ENCODE measurements at regions of chr3 and their contacts with region 1.

Region 1: DNA sequence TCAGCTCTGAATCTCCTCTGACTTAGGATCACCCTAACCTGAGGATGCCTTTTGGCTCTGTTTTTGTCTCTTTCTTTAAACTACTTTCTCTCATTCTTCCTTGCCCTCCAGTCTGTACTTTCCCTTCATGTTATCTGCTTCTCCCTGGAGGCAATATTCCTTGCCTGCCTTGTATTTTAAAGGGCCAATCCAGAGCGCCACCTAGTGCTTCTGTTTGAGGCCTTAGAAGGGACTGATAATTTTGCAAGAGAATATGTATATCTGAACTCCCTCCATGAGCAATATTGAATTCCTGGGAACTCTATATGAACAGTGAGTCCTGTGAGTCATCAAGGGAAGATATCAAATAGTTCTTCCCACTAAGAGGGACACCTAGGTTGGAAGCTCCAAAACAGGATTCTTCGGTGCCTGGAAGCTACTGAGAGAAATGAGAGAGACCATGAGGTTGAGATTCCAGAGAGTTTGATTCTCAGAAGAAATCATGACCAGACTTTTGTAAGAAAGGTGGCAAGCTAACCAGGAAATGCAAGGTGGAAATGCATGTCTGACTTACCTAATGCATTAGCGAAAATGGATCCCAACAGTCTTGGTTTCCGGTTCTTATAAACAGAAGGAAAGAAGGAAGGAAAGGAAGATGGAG is 203.8 kb upstream of the CD96 start:
- DNase-seq: peak; percentile 14
- H3K4me3 Mint-ChIP-seq: no peak overlapping the region
- H3K27ac Mint-ChIP-seq: no peak overlapping the region
- H3K4me1 Mint-ChIP-seq: peaks cover 23% of the 10 kb centered on the region
- H3K27me3 Mint-ChIP-seq: peaks cover 20% of the 10 kb centered on the region

Region 2: GRCh38 chr3:111071257-111072015 is 266.7 kb before region 1 on chr3 and contains the start of gene NECTIN3:
- intact Hi-C with region 1: loop called (anchors 5 kb)
- DNase-seq: peak; percentile 70
- H3K4me3 Mint-ChIP-seq: peak within 1 kb of the TSS; percentile 87
- H3K27ac Mint-ChIP-seq: peak within 1 kb of the TSS; percentile 58
- H3K4me1 Mint-ChIP-seq: peaks cover 23% of the 10 kb centered on the region
- H3K27me3 Mint-ChIP-seq: peaks cover 69% of the 10 kb centered on the region
- total RNA-seq, gene NECTIN3: 2.2 and 2.6 TPM in 2 replicates

Region 3: GRCh38 chr3:111238885-111239284 is 99.3 kb before region 1 on chr3:
- intact Hi-C with region 1: loop called (anchors 2 kb)
- DNase-seq: peak; percentile 40
- H3K4me3 Mint-ChIP-seq: no peak overlapping the region
- H3K27ac Mint-ChIP-seq: no peak overlapping the region
- H3K4me1 Mint-ChIP-seq: peaks cover 26% of the 10 kb centered on the region
- H3K27me3 Mint-ChIP-seq: peaks cover 6% of the 10 kb centered on the region

Region 4: DNA sequence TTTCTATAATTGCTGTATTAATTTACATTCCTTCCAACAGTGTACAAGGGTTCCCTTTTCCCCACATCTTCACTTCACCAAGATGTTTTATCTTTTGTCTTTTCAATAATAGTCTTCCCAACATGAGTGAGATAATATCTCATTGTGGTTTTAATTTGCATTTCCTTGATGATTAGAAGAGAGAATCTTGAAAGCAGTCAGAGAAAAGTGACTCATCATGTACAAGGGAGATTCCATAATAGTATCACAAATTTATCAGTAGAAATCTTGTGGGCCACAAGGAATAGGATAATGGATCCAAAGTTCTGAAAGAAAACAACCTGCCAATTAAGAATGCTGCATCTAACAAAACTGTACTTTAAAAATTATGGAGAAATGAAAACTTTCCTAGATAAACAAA is 77.3 kb before region 1 on chr3:
- intact Hi-C with region 1: loop called (anchors 5 kb)
- DNase-seq: no peak
- H3K4me3 Mint-ChIP-seq: no peak overlapping the region
- H3K27ac Mint-ChIP-seq: no peak overlapping the region
- H3K4me1 Mint-ChIP-seq: peaks cover 17% of the 10 kb centered on the region
- H3K27me3 Mint-ChIP-seq: peaks cover 58% of the 10 kb centered on the region

Region 5: DNA sequence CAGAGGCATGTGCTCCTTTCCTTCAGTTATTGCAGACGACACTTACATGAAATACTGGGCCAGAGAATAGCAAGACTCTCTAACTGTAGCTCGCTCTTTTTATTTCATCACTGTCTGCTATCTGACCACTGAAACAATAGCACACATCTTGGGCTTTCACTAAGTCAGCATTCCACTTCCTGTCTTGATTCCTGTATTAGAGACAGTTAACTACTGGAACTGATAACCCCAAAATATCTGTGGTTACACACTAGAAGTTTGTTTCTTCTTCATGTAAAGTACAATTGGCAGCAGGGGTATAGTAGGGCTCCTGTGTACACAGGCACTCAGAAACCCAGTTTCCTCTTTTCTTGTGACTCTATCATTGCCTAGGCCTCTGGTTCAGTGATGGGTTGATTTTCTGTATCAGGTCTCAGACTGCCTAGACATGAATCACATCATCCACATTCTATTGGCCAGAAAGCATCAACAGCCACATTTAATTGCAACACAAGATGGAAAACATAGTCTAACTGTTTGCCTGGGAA is 26.4 kb before region 1 on chr3:
- intact Hi-C with region 1: loop called (anchors 1 kb)
- DNase-seq: no peak
- H3K4me3 Mint-ChIP-seq: peak overlapping the region; percentile 18
- H3K27ac Mint-ChIP-seq: peak overlapping the region; percentile 77
- H3K4me1 Mint-ChIP-seq: peaks cover 39% of the 10 kb centered on the region
- H3K27me3 Mint-ChIP-seq: no peaks in the 10 kb centered on the region